Heart left ventricle (tissue), 16 donors: ENCODE measurements at regions of chr4 and their contacts with region 1.

Region 1: GRCh38 chr4:6974138-6974848 is 64.7 kb downstream of the TBC1D14 start:
- DNase-seq: peak; percentile 79 to 83 (median 81)
- ATAC-seq: peak; percentile 81 to 92 (median 92)
- H3K4me3 ChIP-seq: no peak overlapping the region
- H3K27ac ChIP-seq: peak overlapping the region in 1 of 12 donors; percentile 13
- H3K4me1 ChIP-seq: peaks cover 0 to 24% (median 0%) of the 10 kb centered on the region in 12 donors
- H3K27me3 ChIP-seq: no peaks in the 10 kb centered on the region
- CTCF ChIP-seq: peak; percentile 92 to 98 (median 96)
- POLR2A ChIP-seq: no peak

Region 2: GRCh38 chr4:7073526-7074390 is 99.5 kb after region 1 on chr4:
- intact Hi-C with region 1: loop called in 9 of 10 experiments (anchors 1 to 10 kb)
- DNase-seq: no peak
- ATAC-seq: peak in 1 of 4 donors; percentile 28
- H3K4me3 ChIP-seq: no peak overlapping the region
- H3K27ac ChIP-seq: no peak overlapping the region
- H3K4me1 ChIP-seq: peaks cover 0 to 18% (median 6%) of the 10 kb centered on the region in 12 donors
- H3K27me3 ChIP-seq: no peaks in the 10 kb centered on the region
- CTCF ChIP-seq: no peak
- POLR2A ChIP-seq: no peak

Region 3: GRCh38 chr4:8267077-8267476 is 1292.8 kb after region 1 on chr4:
- intact Hi-C with region 1: no loop called
- DNase-seq: peak; percentile 78 to 90 (median 85)
- ATAC-seq: peak; percentile 60 to 78 (median 64)
- H3K4me3 ChIP-seq: no peak overlapping the region
- H3K27ac ChIP-seq: peak overlapping the region in 8 of 12 donors; percentile 11 to 57 (median 38)
- H3K4me1 ChIP-seq: peaks cover 3 to 52% (median 34%) of the 10 kb centered on the region in 12 donors
- H3K27me3 ChIP-seq: no peaks in the 10 kb centered on the region
- CTCF ChIP-seq: peak; percentile 58 to 88 (median 78)
- POLR2A ChIP-seq: no peak